K562 (cell line): ENCODE measurements at regions of chr3 and their contacts with region 1.

Region 1: DNA sequence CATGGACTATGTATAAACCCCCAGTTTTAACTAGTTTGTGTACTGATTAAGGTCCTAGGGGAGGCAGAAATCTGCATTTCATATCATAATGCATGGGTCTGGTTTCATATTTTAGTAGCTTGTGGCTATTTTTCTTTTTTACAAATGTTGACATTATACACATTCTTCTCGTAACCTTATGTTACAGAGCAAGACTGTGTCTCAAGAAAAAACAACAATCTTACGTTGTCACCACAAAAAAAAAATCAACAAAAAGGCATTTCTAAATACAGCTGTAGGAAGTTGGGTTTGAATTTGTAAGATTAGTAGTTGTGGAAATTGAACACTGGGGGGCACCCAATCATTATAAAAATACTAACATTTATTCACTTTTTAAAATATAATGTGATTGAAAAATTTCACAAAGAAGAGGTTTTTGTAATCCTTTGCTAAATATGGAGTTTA is 17.9 kb downstream of the SERP1 start:
- DNase-seq: peak in 2 of 4 experiments; percentile 22 to 28
- ATAC-seq: peak; percentile 69
- H3K4me3 ChIP-seq: no peak overlapping the region
- H3K27ac ChIP-seq: no peak overlapping the region
- H3K4me1 ChIP-seq: no peaks in the 10 kb centered on the region
- H3K27me3 ChIP-seq: no peaks in the 10 kb centered on the region
- CTCF ChIP-seq: peak in 2 of 3 experiments; percentile 19 to 57; a peak in 3 of 6 replicates
- EP300 ChIP-seq: no peak
- POLR2A ChIP-seq: no peak
- RAD21 ChIP-seq: peak; percentile 39 to 62; a peak in 3 of 4 replicates

Region 2: GRCh38 chr3:150538324-150539208 is 10.2 kb after region 1 on chr3:
- CTCF ChIA-PET with region 1: no interaction called
- POLR2A ChIA-PET with region 1: interaction called, 10 read pairs
- in situ Hi-C with region 1: no loop called
- intact Hi-C with region 1: no loop called
- DNase-seq: no peak
- ATAC-seq: peak; percentile 44
- H3K4me3 ChIP-seq: no peak overlapping the region
- H3K27ac ChIP-seq: no peak overlapping the region
- H3K4me1 ChIP-seq: no peaks in the 10 kb centered on the region
- H3K27me3 ChIP-seq: no peaks in the 10 kb centered on the region
- CTCF ChIP-seq: no peak
- EP300 ChIP-seq: no peak
- POLR2A ChIP-seq: no peak
- RAD21 ChIP-seq: no peak

Region 3: DNA sequence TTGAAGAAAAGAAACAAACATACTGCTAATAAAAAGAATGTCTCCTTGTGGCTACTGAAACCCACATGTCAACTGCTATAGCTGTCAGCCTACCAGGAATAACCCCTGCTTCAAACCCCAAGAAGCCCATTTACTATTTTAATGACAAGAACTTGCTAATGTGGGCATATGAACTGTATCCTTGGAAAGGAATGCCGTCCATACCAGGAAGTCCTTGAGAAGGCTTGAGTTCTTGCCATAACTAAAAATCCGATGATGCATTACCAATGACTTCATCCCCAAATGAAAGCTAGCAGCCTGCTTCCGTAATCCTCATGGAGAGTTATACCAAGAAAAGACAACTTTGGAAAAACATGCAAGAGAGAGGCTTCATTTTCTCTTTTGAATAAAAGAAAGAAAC is 342.0 kb after region 1 on chr3:
- CTCF ChIA-PET with region 1: interaction called, 6 read pairs
- POLR2A ChIA-PET with region 1: no interaction called
- in situ Hi-C with region 1: loop called (anchors 25 kb)
- intact Hi-C with region 1: loop called (anchors 1 kb)
- DNase-seq: no peak
- ATAC-seq: no peak
- H3K4me3 ChIP-seq: no peak overlapping the region
- H3K27ac ChIP-seq: no peak overlapping the region
- H3K4me1 ChIP-seq: no peaks in the 10 kb centered on the region
- H3K27me3 ChIP-seq: peaks cover 2 to 10% of the 10 kb centered on the region in 2 experiments; a peak in 2 of 5 replicates
- CTCF ChIP-seq: no peak
- EP300 ChIP-seq: no peak
- POLR2A ChIP-seq: no peak
- RAD21 ChIP-seq: no peak